ENCODE measurements at regions of chr16 and their contacts with region 1.

Region 1: DNA sequence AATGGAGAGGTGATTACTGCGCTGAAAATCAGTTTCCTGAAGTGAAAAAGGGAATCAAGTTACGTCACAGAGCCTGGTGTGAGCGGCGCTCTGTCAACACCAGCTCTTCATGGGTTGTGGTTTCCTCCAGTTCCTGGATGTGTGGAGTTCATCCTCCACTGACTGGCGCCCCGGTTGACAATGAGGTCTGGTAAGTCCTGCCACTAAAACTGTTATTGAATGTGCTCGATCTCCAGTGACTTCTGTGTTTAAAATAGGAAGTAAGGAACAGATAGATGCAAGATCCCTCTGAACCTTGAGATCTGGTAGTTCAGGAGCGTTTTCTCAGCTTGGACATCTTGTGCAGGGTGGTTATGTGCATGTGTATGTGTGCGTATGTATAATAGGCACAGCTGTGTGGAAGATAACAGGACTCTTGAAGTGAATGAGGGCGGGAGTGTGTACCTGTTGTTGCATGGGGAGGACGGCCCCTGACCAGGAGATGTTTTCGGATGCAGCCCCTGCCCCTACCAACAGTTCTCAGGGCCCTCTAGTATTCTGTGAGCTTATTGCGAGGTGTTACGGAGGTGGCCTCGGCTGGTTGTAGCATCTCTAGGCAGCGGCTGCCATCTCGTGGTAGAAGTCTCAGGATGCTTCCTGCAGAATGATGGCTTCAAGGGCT is 22.0 kb upstream of the GOT2 start:
- DNase-seq: peak; percentile 60 to 89 (median 82)
- H3K4me3 ChIP-seq: peak overlapping the region in 15 of 59 donors; percentile 4 to 34 (median 18)
- H3K27ac ChIP-seq: peak overlapping the region in 7 of 59 donors; percentile 4 to 59 (median 21)
- H3K27me3 ChIP-seq: no peaks in the 10 kb centered on the region
- CTCF ChIP-seq: peak in 54 of 56 donors; percentile 50 to 89 (median 74)

Region 2: DNA sequence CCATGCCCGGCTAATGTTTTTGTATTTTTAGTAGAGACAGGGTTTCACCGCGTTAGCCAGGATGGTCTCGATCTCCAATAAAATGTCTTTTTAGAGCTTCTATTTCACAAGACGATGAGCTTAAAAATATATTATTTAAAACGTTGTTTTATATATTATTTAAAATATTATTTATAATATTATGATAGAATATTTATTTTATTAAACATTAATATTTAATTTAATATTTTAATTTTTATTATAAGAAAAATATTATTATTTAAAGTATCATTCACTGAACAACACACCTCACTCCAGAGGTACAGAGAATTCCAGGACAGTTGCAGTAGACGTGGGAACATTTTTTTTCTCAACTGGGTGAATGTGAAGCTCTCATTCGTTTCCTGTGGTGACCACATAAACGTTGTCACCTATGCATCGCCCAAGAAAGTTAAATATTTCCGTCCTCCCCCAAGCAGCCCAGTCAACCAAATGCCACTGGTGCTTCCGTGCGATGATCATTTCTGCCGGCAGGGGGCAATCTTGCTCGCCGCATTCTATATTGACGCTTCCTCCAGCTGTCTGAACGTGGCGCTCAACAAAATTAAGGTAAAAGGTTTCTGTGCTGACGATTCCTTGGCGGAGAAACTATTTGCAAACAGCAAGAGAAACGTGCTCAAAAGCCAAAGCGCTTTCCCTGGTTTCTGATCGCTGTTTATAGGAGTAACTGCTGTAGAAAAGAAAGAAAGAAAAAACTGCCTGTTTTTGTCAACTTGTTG is 419.6 kb before region 1 on chr16:
- intact Hi-C with region 1: loop called in 1 of 2 experiments (anchors 5 kb)
- DNase-seq: peak; percentile 70 to 92 (median 86)
- H3K4me3 ChIP-seq: peak overlapping the region; percentile 6 to 65 (median 44)
- H3K27ac ChIP-seq: peak overlapping the region in 1 of 59 donors; percentile 4
- H3K27me3 ChIP-seq: no peaks in the 10 kb centered on the region
- CTCF ChIP-seq: peak; percentile 90 to 100 (median 96)

Region 3: DNA sequence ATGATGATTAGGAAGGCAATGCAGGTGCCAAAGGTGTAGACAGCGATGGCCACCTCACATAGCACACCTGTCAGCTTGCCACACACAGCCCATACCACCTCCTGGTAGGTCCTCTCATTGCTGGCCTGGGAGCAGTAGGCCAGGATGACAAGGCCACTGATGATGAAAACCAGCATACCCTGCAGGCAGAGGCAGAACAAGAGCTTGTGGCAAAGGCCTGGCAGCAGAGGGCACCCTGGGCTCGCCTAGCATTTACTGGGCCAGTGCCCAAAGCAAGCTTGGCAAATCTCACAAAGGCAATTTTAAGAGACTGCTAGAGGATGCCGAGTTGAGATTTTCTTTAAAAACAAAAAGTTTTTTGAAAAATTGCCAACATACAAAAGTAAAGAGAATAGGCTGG is 77.4 kb before region 1 on chr16:
- intact Hi-C with region 1: loop called (anchors 2 to 5 kb)
- DNase-seq: peak; percentile 49 to 81 (median 70)
- H3K4me3 ChIP-seq: no peak overlapping the region
- H3K27ac ChIP-seq: no peak overlapping the region
- H3K27me3 ChIP-seq: no peaks in the 10 kb centered on the region
- CTCF ChIP-seq: peak in 53 of 56 donors; percentile 34 to 78 (median 57)

Region 4: GRCh38 chr16:58684354-58685083 is 71.6 kb before region 1 on chr16 and contains the start of gene SLC38A7:
- intact Hi-C with region 1: loop called (anchors 2 to 5 kb)
- DNase-seq: peak; percentile 88 to 95 (median 92)
- H3K4me3 ChIP-seq: peak within 1 kb of the TSS; percentile 57 to 100 (median 93)
- H3K27ac ChIP-seq: peak within 1 kb of the TSS in 57 of 59 donors; percentile 7 to 94 (median 79)
- H3K27me3 ChIP-seq: no peaks in the 10 kb centered on the region
- CTCF ChIP-seq: peak in 23 of 56 donors; percentile 14 to 48 (median 24)
- total RNA-seq, gene SLC38A7: 17.4 to 52.1 (median 28.9) TPM

Region 5: GRCh38 chr16:58733671-58734458 is 22.3 kb before region 1 on chr16 and contains the start of gene GOT2:
- intact Hi-C with region 1: loop called in 1 of 2 experiments (anchors 1 kb)
- DNase-seq: peak; percentile 61 to 89 (median 78)
- H3K4me3 ChIP-seq: peak within 1 kb of the TSS; percentile 65 to 98 (median 90)
- H3K27ac ChIP-seq: peak within 1 kb of the TSS; percentile 8 to 96 (median 84)
- H3K27me3 ChIP-seq: no peaks in the 10 kb centered on the region
- CTCF ChIP-seq: peak; percentile 65 to 96 (median 90)
- total RNA-seq, gene GOT2: 73.7 to 189 (median 145) TPM

Measured in dorsolateral prefrontal cortex (tissue), 120 donors.